ENCODE measurements at regions of chr3 and their contacts with region 1.

Region 1: DNA sequence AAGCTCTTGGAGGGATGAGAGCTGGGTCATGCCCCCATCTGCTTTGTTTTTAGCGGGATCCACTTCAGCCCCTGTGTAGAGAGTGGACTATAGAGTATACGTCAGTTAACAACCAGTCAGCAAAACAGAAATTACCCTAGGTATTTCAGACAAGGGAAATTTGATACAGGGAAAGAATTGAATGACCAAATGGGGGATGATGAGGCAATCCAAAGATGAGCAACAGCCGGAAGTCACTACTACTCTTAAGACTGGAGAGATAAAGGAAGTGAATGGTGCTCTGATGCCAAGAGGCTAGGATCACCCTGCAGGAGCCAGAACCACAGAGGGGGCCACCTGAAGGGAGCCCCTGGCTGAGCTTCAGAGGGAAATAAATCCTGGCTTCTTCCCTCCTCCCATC is 1.7 kb upstream of the GPR62 start:
- DNase-seq: no peak
- H3K4me3 ChIP-seq: no peak overlapping the region
- H3K27ac ChIP-seq: no peak overlapping the region
- H3K4me1 ChIP-seq: peaks cover 0 to 5% of the 10 kb centered on the region in 2 donors
- H3K27me3 ChIP-seq: no peaks in the 10 kb centered on the region
- CTCF ChIP-seq: no peak
- POLR2A ChIP-seq: no peak

Region 2: DNA sequence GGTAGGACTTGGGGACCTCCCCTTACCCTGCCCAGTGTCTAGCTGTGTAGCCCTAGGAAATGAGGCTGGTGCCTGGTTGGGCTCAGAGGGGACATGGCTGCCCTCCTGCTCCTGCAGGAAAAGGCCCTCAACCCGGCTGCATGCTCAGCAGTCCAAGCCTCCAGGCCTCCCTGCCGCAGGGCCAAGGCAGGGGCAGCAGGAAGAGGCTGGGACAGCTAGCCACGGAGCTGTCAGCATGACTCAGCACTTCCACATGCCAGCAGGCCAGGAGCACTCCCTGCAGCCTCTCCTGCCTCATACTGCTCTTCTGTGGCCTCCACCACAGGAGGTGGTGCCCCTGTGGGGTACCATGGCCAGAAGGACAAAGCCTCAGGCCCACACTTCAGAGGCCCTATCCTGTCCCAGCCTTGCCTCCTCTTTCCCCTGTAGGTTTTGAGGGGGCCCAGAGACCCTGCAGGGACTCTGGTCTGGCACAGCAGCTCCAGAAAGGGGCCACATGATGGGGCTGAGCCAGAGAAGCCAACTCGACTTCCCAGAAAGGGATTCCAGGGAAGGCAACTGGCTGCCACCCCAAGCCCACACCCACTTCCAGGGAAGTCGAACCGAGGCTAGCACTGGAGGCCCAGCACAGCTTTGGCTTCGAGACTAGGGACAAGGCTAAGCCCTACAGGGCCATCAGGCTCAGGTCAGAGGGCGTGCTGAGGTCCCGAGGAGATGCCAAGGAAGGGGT is 1282.8 kb after region 1 on chr3:
- intact Hi-C with region 1: loop called (anchors 5 kb)
- DNase-seq: no peak
- H3K4me3 ChIP-seq: no peak overlapping the region
- H3K27ac ChIP-seq: peak overlapping the region in 1 of 2 donors; percentile 56
- H3K4me1 ChIP-seq: no peaks in the 10 kb centered on the region
- H3K27me3 ChIP-seq: no peaks in the 10 kb centered on the region
- CTCF ChIP-seq: no peak
- POLR2A ChIP-seq: no peak